Activated T-helper 1 cell treated with anti-CD3 and anti-CD28 coated beads, Interleukin-12 subunit alpha, Interleukin-12 subunit beta, Interleukin-2, Interleukin-4 antibody, amounts not matched to agents 30 ng/mL and 10 ng/mL and 1 ng/mL, durations not matched to agents 14 hours and 24 hours and 36 hours (primary cell): ENCODE measurements at regions of chr1 and their contacts with region 1.

Region 1: DNA sequence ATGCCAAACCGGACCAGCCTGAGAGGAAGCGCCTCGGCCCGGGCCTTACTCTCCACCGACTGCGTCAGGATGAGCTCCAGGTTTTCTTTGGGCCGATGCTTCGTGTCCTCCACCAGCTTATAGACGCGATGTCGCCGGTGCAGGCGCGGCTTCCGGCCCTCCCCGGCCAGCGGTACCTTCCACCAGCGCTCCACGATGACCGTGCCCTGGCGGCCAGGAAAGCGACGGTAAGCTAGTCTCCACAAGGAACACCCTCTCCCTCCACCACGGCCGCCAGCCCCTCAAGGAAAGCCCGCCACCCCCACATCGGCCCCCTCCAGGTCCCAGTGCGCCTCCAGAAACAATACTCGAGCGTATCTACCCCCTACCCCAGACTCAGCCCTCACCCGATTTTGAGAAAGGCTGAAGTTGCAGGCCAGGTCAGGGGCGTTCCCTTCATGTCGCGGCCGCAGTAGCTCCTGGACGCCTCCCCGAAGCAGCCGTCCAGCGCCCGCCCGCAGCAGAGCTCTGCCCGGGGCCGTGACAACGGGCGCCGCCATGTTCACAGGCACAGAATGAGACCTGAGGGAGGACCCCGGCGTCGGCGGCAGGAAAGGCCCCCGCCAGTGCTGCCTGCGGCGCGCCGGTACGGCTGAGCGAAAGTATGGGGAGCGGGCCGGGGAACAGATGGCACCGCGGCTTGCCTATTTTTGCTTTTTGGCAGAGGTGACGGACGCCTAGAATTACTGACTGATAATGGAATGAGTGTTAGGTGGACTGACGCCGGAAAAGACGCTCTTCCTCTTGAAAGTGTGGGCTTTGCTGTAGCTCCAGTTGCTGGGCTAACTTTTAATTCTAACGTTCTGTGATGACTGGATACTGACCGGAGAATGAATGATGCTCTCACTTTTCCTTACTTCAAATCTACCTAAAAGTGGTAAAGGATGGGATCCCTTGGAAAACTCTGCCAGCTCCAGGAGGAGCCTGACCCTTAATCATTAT is at the start of gene MRPL9:
- DNase-seq: peak; percentile 84
- H3K4me3 Mint-ChIP-seq: peak within 1 kb of the TSS; percentile 89
- H3K27ac Mint-ChIP-seq: peak within 1 kb of the TSS; percentile 96
- H3K4me1 Mint-ChIP-seq: peaks cover 35% of the 10 kb centered on the region
- H3K27me3 Mint-ChIP-seq: no peaks in the 10 kb centered on the region
- total RNA-seq, gene MRPL9: 136 and 141 TPM in 2 replicates

Region 2: GRCh38 chr1:151653397-151653796 is 109.8 kb before region 1 on chr1:
- intact Hi-C with region 1: no loop called
- DNase-seq: no peak
- H3K4me3 Mint-ChIP-seq: no peak overlapping the region
- H3K27ac Mint-ChIP-seq: no peak overlapping the region
- H3K4me1 Mint-ChIP-seq: peaks cover 20% of the 10 kb centered on the region
- H3K27me3 Mint-ChIP-seq: no peaks in the 10 kb centered on the region

Region 3: DNA sequence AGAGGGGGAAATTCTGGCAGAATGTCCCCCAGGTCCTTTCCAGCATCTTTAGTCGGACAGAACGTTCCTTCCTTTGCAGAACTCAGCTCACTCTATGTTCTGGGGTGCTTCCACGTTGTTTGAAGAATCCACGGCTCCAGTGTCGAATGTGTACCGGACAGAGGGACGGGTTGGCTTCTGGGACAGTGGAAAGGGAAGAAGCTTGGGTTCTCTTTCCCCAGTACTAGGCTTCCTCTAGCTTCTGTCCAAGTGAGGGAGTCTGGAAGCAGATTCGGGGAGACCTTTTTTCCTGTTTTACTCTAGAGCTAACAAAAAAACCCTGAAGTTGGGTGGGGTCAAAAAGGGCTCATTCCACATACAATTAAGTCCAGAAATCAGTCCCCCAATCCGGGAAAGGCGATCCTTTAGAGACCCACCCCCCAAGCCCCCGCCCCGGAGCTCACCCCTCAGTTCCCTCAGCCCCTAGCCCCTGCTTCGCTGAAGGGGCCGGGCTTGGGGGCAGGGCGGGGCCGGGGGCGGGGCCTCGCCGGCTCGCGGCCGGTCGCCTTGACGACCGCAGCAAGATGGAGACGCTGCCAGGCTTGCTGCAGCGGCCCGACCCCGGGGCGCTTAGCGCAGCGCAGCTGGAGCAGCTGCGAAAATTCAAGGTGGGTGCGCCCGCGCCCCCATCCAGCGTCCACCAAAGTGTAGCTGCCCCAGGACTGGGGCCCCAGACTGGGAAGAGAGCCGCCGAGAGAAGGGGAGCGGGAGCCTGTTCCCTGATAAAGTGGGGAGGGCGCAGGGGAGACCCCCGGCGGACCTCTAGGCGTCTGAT is 42.0 kb before region 1 on chr1 and contains the start of gene RIIAD1:
- intact Hi-C with region 1: loop called (anchors 1 kb)
- DNase-seq: peak; percentile 36
- H3K4me3 Mint-ChIP-seq: peak within 1 kb of the TSS; percentile 77
- H3K27ac Mint-ChIP-seq: no peak within 1 kb of the TSS
- H3K4me1 Mint-ChIP-seq: peaks cover 18% of the 10 kb centered on the region
- H3K27me3 Mint-ChIP-seq: peaks cover 76% of the 10 kb centered on the region
- total RNA-seq, gene RIIAD1: not detected in 2 replicates